Upper lobe of right lung (tissue), 1 donor: ENCODE measurements at regions of chr7 and their contacts with region 1.

Region 1: GRCh38 chr7:123635551-123636359 is 19.9 kb upstream of the LMOD2 start:
- DNase-seq: no peak
- ATAC-seq: no peak
- H3K4me3 ChIP-seq: no peak overlapping the region
- H3K27ac ChIP-seq: no peak overlapping the region
- H3K4me1 ChIP-seq: no peaks in the 10 kb centered on the region
- H3K27me3 ChIP-seq: no peaks in the 10 kb centered on the region
- CTCF ChIP-seq: peak; percentile 51

Region 2: DNA sequence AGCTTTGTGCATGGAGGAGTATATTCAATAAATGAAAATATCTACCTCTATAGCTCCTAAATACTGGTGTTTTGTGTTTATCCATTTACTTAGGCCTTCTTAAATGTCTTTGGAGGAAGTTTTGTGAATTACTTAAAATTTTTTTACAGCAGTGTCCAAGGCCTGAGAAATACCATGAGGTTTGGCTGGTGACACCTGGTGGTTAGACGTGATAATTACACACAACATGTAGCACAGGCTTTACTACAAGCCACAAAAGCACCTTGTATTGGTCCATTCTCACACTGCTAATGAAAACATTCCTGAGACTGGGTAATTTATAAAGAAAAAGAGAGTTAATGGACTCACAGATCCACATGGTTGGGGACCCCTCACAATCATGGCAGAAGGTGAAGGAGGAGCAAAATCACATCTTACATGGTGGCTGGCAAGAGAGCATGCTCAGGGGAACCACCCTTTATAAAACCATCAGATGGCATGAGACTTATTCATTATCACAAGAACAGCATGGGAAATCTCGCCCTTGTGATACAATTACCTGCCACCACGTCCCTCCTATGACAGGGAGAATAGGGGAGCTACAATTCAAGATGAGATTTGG is 229.9 kb after region 1 on chr7:
- intact Hi-C with region 1: loop called (anchors 10 kb)
- DNase-seq: no peak
- ATAC-seq: peak; percentile 96
- H3K4me3 ChIP-seq: no peak overlapping the region
- H3K27ac ChIP-seq: no peak overlapping the region
- H3K4me1 ChIP-seq: no peaks in the 10 kb centered on the region
- H3K27me3 ChIP-seq: no peaks in the 10 kb centered on the region
- CTCF ChIP-seq: peak; percentile 76